HepG2 (cell line): ENCODE measurements at regions of chr2 and their contacts with region 1.

Region 1: DNA sequence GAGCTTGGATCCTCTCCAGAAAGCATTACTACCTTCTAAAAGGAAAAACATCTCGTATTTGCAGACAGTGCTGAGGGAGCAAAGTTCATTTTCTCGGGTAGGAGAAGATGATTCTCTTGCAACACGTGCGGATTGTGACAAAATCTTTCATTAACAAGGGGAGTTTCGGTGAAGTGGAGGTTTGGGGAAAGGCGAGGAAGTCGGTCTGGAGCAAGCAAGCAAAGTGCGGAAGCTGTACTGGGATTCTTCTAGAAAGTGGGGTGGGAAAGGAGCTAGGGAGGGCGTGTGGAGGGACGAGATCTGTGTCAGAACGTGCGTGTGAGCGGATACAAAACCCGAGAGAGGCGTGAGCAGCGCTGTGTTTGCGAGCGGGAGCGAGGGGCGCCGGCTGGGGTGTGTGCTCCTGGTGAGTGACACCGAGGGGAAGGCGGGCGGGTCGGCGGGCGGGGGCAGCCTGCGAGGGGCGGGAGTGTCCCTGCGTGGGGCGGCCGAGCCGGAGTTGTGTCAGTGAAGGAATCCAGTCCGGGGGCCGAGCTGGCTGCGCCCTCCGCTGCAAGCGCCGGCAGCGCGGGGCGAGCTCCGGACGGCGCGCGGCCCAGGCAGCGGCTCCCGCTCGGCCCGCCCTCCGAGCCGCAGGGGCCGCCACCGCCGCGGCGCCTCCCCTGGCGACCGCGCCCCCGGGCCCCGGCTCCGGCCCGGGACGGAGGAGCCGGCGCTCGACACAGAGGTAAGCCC is at the start of gene SPATS2L:
- DNase-seq: peak; percentile 95
- ATAC-seq: peak; percentile 72
- H3K4me3 ChIP-seq: peak within 1 kb of the TSS; percentile 84 to 94 (median 88)
- H3K27ac ChIP-seq: peak within 1 kb of the TSS; percentile 96
- H3K4me1 ChIP-seq: peaks cover 72% of the 10 kb centered on the region
- H3K27me3 ChIP-seq: no peaks in the 10 kb centered on the region; a peak in 1 of 5 replicates
- CTCF ChIP-seq: no peak
- EP300 ChIP-seq: peak; percentile 60 to 81; a peak in 3 of 4 replicates
- POLR2A ChIP-seq: peak; percentile 82 to 85
- RAD21 ChIP-seq: no peak
- total RNA-seq, gene SPATS2L: 154 and 165 TPM in 2 replicates

Region 2: GRCh38 chr2:199985625-199986207 is 320.6 kb before region 1 on chr2:
- CTCF ChIA-PET with region 1: no interaction called
- POLR2A ChIA-PET with region 1: no interaction called
- in situ Hi-C with region 1: loop called (anchors 10 kb)
- intact Hi-C with region 1: loop called (anchors 2 kb)
- DNase-seq: peak; percentile 83
- ATAC-seq: peak; percentile 97
- H3K4me3 ChIP-seq: peak overlapping the region in 2 of 3 experiments; percentile 16 to 42; a peak in 2 of 6 replicates
- H3K27ac ChIP-seq: no peak overlapping the region
- H3K4me1 ChIP-seq: peaks cover 9% of the 10 kb centered on the region
- H3K27me3 ChIP-seq: no peaks in the 10 kb centered on the region
- CTCF ChIP-seq: peak; percentile 86
- EP300 ChIP-seq: no peak
- POLR2A ChIP-seq: no peak
- RAD21 ChIP-seq: peak; percentile 54; the same call in 1 of the 2 replicates

Region 3: GRCh38 chr2:200077210-200077650 is 229.1 kb before region 1 on chr2:
- CTCF ChIA-PET with region 1: no interaction called
- POLR2A ChIA-PET with region 1: no interaction called
- in situ Hi-C with region 1: no loop called
- intact Hi-C with region 1: loop called (anchors 1 kb)
- DNase-seq: peak; percentile 92
- ATAC-seq: peak; percentile 100
- H3K4me3 ChIP-seq: peak overlapping the region; percentile 30 to 54 (median 45); a peak in 4 of 6 replicates
- H3K27ac ChIP-seq: peak overlapping the region; percentile 68
- H3K4me1 ChIP-seq: peaks cover 24% of the 10 kb centered on the region
- H3K27me3 ChIP-seq: peaks cover 0 to 20% of the 10 kb centered on the region in 2 experiments; a peak in 3 of 5 replicates
- CTCF ChIP-seq: no peak
- EP300 ChIP-seq: peak in 1 of 2 experiments; percentile 89; a peak in 2 of 4 replicates
- POLR2A ChIP-seq: no peak
- RAD21 ChIP-seq: no peak

Region 4: DNA sequence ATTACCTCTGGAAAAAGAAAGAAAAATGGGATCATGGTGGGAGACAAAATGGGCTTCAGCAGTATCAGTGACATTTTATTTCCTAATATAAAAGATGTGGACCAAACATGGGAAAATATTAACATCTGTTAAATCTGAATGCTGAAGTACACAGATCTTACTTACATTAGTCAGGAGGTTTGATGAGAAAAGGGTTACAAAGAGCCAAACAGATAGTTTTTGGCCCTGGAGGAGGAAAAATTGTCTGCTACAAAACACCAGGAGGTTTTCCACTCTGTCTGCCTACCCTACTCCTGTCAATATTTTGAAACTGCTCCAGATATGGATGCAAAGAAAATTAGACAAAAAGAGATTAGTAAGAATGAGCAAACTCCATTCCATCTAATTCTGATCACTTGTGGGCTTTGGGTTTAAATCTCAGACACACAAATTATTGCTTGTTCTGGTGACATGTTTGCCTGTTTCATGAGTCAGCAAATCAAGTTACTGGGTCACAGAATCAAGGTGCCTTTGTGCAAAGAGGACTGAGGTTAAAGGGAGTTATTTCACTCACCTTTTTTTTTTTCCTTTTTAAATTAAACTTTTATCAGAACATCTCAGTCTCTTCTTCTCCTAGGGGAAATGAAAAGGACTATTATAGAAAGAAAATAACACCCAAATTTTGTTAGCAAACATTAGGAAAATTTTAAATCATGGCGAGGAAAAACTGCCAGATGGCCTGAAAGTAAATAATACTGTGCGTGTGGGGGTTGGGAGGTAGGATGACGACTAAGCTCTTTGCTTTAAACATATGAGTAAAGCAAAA is 86.9 kb before region 1 on chr2:
- CTCF ChIA-PET with region 1: no interaction called
- POLR2A ChIA-PET with region 1: interaction called, 35 read pairs
- in situ Hi-C with region 1: loop called (anchors 5 kb)
- intact Hi-C with region 1: loop called (anchors 1 kb)
- DNase-seq: peak; percentile 72
- ATAC-seq: no peak
- H3K4me3 ChIP-seq: no peak overlapping the region
- H3K27ac ChIP-seq: peak overlapping the region; percentile 75
- H3K4me1 ChIP-seq: peaks cover 71% of the 10 kb centered on the region
- H3K27me3 ChIP-seq: no peaks in the 10 kb centered on the region
- CTCF ChIP-seq: no peak
- EP300 ChIP-seq: peak in 1 of 2 experiments; percentile 64; a peak in 2 of 4 replicates
- POLR2A ChIP-seq: no peak
- RAD21 ChIP-seq: no peak

Region 5: GRCh38 chr2:200319548-200320337 is 13.4 kb after region 1 on chr2:
- CTCF ChIA-PET with region 1: no interaction called
- POLR2A ChIA-PET with region 1: interaction called, 187 read pairs
- in situ Hi-C with region 1: no loop called
- intact Hi-C with region 1: loop called (anchors 1 kb)
- DNase-seq: peak; percentile 92
- ATAC-seq: peak; percentile 67
- H3K4me3 ChIP-seq: peak overlapping the region in 2 of 3 experiments; percentile 4 to 12; a peak in 2 of 6 replicates
- H3K27ac ChIP-seq: peak overlapping the region; percentile 90
- H3K4me1 ChIP-seq: peaks cover 98% of the 10 kb centered on the region
- H3K27me3 ChIP-seq: no peaks in the 10 kb centered on the region
- CTCF ChIP-seq: no peak
- EP300 ChIP-seq: peak in 1 of 2 experiments; percentile 92; a peak in 2 of 4 replicates
- POLR2A ChIP-seq: no peak
- RAD21 ChIP-seq: no peak

Region 6: GRCh38 chr2:200483729-200484198 is 177.4 kb after region 1 on chr2:
- CTCF ChIA-PET with region 1: no interaction called
- POLR2A ChIA-PET with region 1: interaction called, 10 read pairs
- in situ Hi-C with region 1: no loop called
- intact Hi-C with region 1: no loop called
- DNase-seq: peak; percentile 64
- ATAC-seq: peak; percentile 86
- H3K4me3 ChIP-seq: no peak overlapping the region
- H3K27ac ChIP-seq: no peak overlapping the region
- H3K4me1 ChIP-seq: peaks cover 68% of the 10 kb centered on the region
- H3K27me3 ChIP-seq: no peaks in the 10 kb centered on the region
- CTCF ChIP-seq: peak; percentile 90
- EP300 ChIP-seq: 0 out of 4 replicates have a peak, but pooled peaks of 1 of the 2 experiments have one; percentile 30
- POLR2A ChIP-seq: peak in 1 of 2 experiments; percentile 45; a peak in 2 of 4 replicates
- RAD21 ChIP-seq: peak; percentile 62

Region 7: DNA sequence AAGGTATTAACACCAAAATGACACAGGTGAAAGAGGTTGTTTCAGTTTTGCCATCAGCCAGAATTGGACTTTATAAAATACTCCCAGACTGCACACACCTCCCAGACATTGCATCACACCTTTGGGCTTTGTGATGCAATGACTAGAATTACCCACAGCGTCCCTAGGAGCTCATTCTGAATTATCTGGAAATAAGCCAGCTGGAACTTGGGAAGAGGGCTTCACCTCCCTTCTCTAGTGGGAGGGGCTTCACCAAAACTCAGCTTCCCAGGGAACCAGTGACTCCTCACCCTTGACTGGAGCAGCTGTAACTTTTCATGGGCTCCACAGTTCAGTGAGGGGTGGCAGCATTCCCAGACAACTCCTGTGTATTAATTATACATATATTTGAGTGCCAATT is 422.3 kb after region 1 on chr2:
- CTCF ChIA-PET with region 1: no interaction called
- POLR2A ChIA-PET with region 1: no interaction called
- in situ Hi-C with region 1: no loop called
- intact Hi-C with region 1: no loop called
- DNase-seq: no peak
- ATAC-seq: no peak; the same call in 2 of the 3 replicates
- H3K4me3 ChIP-seq: no peak overlapping the region
- H3K27ac ChIP-seq: no peak overlapping the region
- H3K4me1 ChIP-seq: no peaks in the 10 kb centered on the region
- H3K27me3 ChIP-seq: peaks cover 2 to 31% of the 10 kb centered on the region in 2 experiments; a peak in 3 of 5 replicates
- CTCF ChIP-seq: no peak
- EP300 ChIP-seq: no peak
- POLR2A ChIP-seq: no peak
- RAD21 ChIP-seq: no peak